Psoas muscle (tissue), 8 donors: ENCODE measurements at regions of chr19 and their contacts with region 1.

Region 1: GRCh38 chr19:49502866-49503581 is 6.8 kb downstream of the RPS11 start:
- DNase-seq: peak in 1 of 2 donors; percentile 52
- ATAC-seq: peak; percentile 50 to 71 (median 62)
- H3K4me3 ChIP-seq: peak overlapping the region; percentile 34
- H3K27ac ChIP-seq: no peak overlapping the region
- H3K4me1 ChIP-seq: peaks cover 32% of the 10 kb centered on the region
- H3K27me3 ChIP-seq: no peaks in the 10 kb centered on the region
- CTCF ChIP-seq: peak; percentile 65

Region 2: DNA sequence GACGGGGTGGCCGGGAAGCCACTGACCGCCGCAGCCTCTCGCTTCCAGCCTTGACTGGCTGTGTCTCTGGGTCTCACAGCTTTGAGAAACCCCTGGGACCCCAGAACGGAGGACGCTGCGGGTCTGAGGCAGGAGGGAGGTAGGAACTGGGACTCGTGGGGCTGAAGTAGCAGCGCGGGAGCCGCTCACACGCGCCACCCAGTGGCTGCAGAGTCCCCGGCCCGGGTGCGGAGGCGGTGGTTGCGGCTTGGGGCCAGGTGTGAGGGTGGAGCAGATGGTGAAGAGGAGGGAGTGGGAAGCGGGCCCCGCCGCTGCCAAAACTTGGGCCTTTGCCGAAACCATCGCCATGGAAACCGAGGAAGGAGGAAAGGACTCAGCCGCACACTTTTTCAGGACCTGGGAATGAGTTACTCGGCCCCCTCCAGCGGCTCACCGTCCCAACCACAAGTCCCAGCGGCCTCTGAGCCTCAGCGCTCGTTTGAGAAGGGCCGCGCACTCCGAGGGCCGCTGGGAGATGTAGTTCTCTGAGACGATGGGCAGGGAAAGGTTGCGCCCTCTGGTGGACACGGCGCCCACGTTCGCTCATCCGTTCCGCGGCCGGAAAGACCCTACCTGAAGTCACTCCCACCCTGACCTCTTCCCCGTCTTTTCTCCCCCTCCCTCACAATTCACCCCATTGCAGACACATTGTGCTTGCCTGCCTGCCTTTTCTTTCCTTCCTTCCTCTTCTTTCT is 59.5 kb before region 1 on chr19:
- intact Hi-C with region 1: no loop called
- DNase-seq: peak; percentile 95 to 97
- ATAC-seq: peak; percentile 91 to 95 (median 94)
- H3K4me3 ChIP-seq: peak overlapping the region; percentile 77
- H3K27ac ChIP-seq: peak overlapping the region; percentile 63
- H3K4me1 ChIP-seq: peaks cover 5% of the 10 kb centered on the region
- H3K27me3 ChIP-seq: peaks cover 0 to 36% (median 21%) of the 10 kb centered on the region in 3 donors
- CTCF ChIP-seq: peak; percentile 77

Region 3: GRCh38 chr19:49546825-49547565 is 44.0 kb after region 1 on chr19:
- intact Hi-C with region 1: loop called (anchors 1 to 2 kb)
- DNase-seq: no peak
- ATAC-seq: peak; percentile 81 to 95 (median 86)
- H3K4me3 ChIP-seq: peak overlapping the region; percentile 35
- H3K27ac ChIP-seq: no peak overlapping the region
- H3K4me1 ChIP-seq: peaks cover 5% of the 10 kb centered on the region
- H3K27me3 ChIP-seq: no peaks in the 10 kb centered on the region
- CTCF ChIP-seq: peak; percentile 85

Region 4: DNA sequence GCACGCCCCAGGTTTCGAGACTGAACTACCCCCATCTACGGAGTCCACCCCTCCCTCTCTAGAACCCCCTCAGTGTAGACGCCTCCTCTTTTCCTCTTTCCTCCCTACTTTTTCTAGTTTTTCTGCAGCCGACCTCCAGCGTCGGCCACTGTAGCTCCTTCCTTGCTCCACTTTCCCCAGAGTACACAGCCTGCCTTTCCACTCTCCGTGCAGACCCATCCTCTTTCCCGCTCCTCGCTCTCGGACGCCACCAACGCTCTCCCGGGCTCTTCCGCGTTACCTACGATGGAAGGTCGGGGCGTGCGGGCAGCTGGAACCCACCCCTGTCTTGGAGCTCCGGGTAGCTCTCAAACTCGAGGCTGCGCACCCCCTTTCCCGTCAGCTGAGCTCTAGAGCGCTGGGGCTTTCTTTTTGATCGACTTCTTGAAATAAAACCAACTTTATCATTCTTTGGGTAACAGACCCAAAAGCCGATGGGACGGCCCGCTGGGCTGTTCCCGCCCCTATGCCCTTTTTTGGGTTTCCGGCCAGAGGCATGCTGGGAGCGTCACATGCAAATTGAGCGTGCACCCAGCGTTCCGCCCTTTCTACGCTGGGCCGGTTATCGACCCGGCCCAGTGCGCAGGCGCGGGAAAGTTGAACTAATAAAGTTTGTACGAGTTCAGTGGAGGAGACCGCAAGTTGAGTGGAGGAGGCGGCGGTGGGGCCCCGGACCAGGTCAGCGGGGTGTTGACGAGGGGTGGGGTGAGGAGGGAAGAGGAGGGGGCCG is 162.5 kb after region 1 on chr19 and contains the starts of genes BCL2L12 and IRF3:
- intact Hi-C with region 1: no loop called
- DNase-seq: peak; percentile 98 to 99
- ATAC-seq: peak; percentile 90 to 93 (median 91)
- H3K4me3 ChIP-seq: peak within 1 kb of the TSS; percentile 70
- H3K27ac ChIP-seq: peak within 1 kb of the TSS; percentile 49
- H3K4me1 ChIP-seq: peaks cover 8% of the 10 kb centered on the region
- H3K27me3 ChIP-seq: no peaks in the 10 kb centered on the region
- CTCF ChIP-seq: peak; percentile 2
- total RNA-seq, gene BCL2L12: 13.0 to 21.5 (median 15.8) TPM
- total RNA-seq, gene IRF3: 10.3 to 22.1 (median 14.4) TPM

Region 5: GRCh38 chr19:49701271-49701786 is 198.3 kb after region 1 on chr19:
- intact Hi-C with region 1: no loop called
- DNase-seq: no peak
- ATAC-seq: no peak
- H3K4me3 ChIP-seq: no peak overlapping the region
- H3K27ac ChIP-seq: no peak overlapping the region
- H3K4me1 ChIP-seq: no peaks in the 10 kb centered on the region
- H3K27me3 ChIP-seq: no peaks in the 10 kb centered on the region
- CTCF ChIP-seq: no peak

Region 6: GRCh38 chr19:49741210-49741844 is 238.3 kb after region 1 on chr19:
- intact Hi-C with region 1: no loop called
- DNase-seq: no peak
- ATAC-seq: no peak
- H3K4me3 ChIP-seq: no peak overlapping the region
- H3K27ac ChIP-seq: no peak overlapping the region
- H3K4me1 ChIP-seq: no peaks in the 10 kb centered on the region
- H3K27me3 ChIP-seq: no peaks in the 10 kb centered on the region
- CTCF ChIP-seq: no peak